ENCODE measurements at regions of chr20 and their contacts with region 1.

Region 1: DNA sequence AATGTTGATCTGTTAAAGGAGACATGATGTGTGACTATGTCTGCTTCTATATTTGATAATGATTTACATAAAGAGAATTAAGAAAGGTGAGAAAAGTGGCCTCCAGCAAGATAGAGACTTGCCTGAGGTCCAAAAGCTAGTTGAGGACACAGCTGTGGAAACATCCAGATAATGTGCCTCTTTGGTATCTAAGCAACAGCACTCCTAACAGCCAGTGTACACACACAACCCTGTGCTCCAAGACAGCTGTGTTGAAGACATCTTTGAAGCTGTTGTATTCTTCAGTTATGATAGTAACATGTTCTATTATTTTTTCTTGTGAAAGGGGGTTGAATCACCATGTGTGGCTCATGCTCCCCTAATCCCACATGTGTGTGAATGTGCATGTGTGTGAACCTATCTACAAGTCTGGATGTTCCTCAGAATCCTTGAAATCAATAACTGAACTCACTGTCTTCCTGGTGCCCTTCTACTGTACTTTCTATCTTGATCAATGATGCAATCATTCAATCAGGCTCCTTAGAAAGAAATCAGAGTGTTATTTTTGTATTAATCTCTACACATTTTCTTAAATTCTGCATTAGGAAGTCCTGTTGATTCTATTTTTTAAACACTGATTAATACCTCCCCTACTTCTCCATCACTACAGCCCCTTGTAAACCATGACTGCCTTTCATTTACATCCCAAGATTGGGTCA is 116.7 kb upstream of the SSTR4 start:
- DNase-seq: no peak

Region 2: DNA sequence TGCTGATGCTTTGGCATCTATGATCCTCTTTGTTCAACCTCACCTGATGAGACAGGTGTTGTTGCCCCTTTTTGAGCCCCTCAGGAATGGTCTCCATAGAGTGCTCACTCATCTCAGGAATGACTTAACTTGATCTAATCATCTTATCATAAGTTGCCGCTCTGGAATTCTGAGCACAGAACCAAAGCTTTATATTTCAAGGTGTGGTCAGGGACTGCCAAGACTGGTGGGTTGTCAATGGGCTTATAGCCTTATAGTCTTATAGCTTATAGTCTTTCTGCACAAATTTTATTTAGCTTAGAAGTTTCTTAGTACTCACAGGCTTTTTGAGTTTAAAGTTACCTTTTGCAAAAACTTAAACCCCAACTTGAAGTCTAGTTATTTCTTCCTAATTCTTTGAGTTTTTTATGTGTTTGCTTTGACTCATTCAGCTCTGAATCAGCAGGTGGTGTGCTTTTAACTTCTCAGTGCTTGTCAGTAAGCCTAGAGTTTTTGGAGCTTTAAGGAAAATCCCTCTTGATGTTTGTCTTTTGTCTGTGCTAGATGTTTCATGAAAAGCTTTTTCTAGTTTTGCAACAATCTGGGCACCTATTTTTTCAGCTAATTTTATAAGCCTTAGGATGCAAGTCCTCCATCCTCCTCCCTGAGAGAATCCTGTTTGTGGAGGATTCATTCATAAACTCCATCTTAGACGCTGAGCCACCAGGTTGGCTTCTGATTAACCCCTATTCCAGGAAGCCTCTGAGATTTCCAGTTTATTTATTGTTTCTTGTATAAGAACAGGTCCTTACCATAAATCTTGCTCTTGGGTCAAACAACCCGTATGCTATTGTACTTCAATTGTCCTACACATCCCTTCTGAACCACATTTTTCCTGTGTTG is 44.4 kb after region 1 on chr20:
- intact Hi-C with region 1: loop called in 1 of 2 experiments (anchors 2 kb)
- DNase-seq: no peak

Measured in posterior vena cava (tissue), 2 donors.